IMR-90 (cell line): ENCODE measurements at regions of chr17 and their contacts with region 1.

Region 1: GRCh38 chr17:32161506-32162365 is 19.4 kb downstream of the RHOT1 start:
- DNase-seq: peak; percentile 93
- ATAC-seq: peak; percentile 90
- H3K4me3 ChIP-seq: no peak overlapping the region
- H3K27ac ChIP-seq: peak overlapping the region; percentile 50; the same call in 1 of the 2 replicates
- H3K4me1 ChIP-seq: peaks cover 12% of the 10 kb centered on the region
- H3K27me3 ChIP-seq: no peaks in the 10 kb centered on the region
- CTCF ChIP-seq: no peak
- POLR2A ChIP-seq: no peak
- RAD21 ChIP-seq: no peak

Region 2: GRCh38 chr17:31869797-31870568 is 291.8 kb before region 1 on chr17:
- CTCF ChIA-PET with region 1: no interaction called
- POLR2A ChIA-PET with region 1: no interaction called
- dilution Hi-C with region 1: no loop called
- in situ Hi-C with region 1: no loop called
- intact Hi-C with region 1: no loop called
- DNase-seq: no peak
- ATAC-seq: no peak
- H3K4me3 ChIP-seq: no peak overlapping the region
- H3K27ac ChIP-seq: no peak overlapping the region
- H3K4me1 ChIP-seq: no peaks in the 10 kb centered on the region
- H3K27me3 ChIP-seq: no peaks in the 10 kb centered on the region
- CTCF ChIP-seq: no peak
- POLR2A ChIP-seq: no peak
- RAD21 ChIP-seq: no peak

Region 3: GRCh38 chr17:32127158-32127897 is 34.4 kb before region 1 on chr17:
- CTCF ChIA-PET with region 1: no interaction called
- POLR2A ChIA-PET with region 1: no interaction called
- dilution Hi-C with region 1: no loop called
- in situ Hi-C with region 1: no loop called
- intact Hi-C with region 1: no loop called
- DNase-seq: peak; percentile 54
- ATAC-seq: peak; percentile 98
- H3K4me3 ChIP-seq: peak overlapping the region; percentile 56
- H3K27ac ChIP-seq: peak overlapping the region; percentile 59
- H3K4me1 ChIP-seq: 0 out of 2 replicates have a peak, but pooled peaks cover 2% of the 10 kb centered on the region
- H3K27me3 ChIP-seq: no peaks in the 10 kb centered on the region
- CTCF ChIP-seq: no peak
- POLR2A ChIP-seq: no peak; the same call in 1 of the 2 replicates
- RAD21 ChIP-seq: no peak

Region 4: GRCh38 chr17:32174889-32175288 is 13.2 kb after region 1 on chr17:
- CTCF ChIA-PET with region 1: interaction called, 3 read pairs
- POLR2A ChIA-PET with region 1: no interaction called
- dilution Hi-C with region 1: no loop called
- in situ Hi-C with region 1: no loop called
- intact Hi-C with region 1: loop called (anchors 2 kb)
- DNase-seq: no peak
- ATAC-seq: no peak
- H3K4me3 ChIP-seq: no peak overlapping the region
- H3K27ac ChIP-seq: no peak overlapping the region
- H3K4me1 ChIP-seq: no peaks in the 10 kb centered on the region
- H3K27me3 ChIP-seq: no peaks in the 10 kb centered on the region
- CTCF ChIP-seq: no peak
- POLR2A ChIP-seq: no peak
- RAD21 ChIP-seq: no peak

Region 5: DNA sequence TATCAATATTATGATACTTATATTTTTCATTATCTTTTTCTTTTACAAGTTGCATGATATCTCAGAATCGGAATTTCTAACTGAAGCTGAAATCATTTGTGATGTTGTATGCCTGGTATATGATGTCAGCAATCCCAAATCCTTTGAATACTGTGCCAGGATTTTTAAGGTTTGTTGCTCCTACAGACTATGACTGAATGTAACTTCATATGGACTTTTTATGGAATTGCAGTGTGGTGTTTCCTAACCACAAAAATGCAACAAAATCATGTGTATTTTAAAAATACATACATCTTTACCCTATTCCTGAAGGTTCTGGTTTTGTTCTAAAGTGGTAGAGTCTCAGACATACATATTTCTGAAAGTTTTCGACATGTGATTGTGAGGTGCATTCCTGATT is 45.1 kb after region 1 on chr17:
- CTCF ChIA-PET with region 1: no interaction called
- POLR2A ChIA-PET with region 1: no interaction called
- dilution Hi-C with region 1: no loop called
- in situ Hi-C with region 1: no loop called
- intact Hi-C with region 1: no loop called
- DNase-seq: peak; percentile 91
- ATAC-seq: peak; percentile 21
- H3K4me3 ChIP-seq: no peak overlapping the region
- H3K27ac ChIP-seq: no peak overlapping the region
- H3K4me1 ChIP-seq: peaks cover 14% of the 10 kb centered on the region
- H3K27me3 ChIP-seq: no peaks in the 10 kb centered on the region
- CTCF ChIP-seq: no peak
- POLR2A ChIP-seq: no peak
- RAD21 ChIP-seq: no peak

Region 6: GRCh38 chr17:32298298-32298697 is 136.6 kb after region 1 on chr17:
- CTCF ChIA-PET with region 1: no interaction called
- POLR2A ChIA-PET with region 1: no interaction called
- dilution Hi-C with region 1: no loop called
- in situ Hi-C with region 1: no loop called
- intact Hi-C with region 1: no loop called
- DNase-seq: no peak
- ATAC-seq: no peak
- H3K4me3 ChIP-seq: no peak overlapping the region
- H3K27ac ChIP-seq: no peak overlapping the region
- H3K4me1 ChIP-seq: no peaks in the 10 kb centered on the region
- H3K27me3 ChIP-seq: peaks cover 32% of the 10 kb centered on the region
- CTCF ChIP-seq: no peak
- POLR2A ChIP-seq: no peak
- RAD21 ChIP-seq: no peak